Activated CD8-positive, alpha-beta T cell treated with anti-CD3 and anti-CD28 coated beads, Interleukin-2, amount 10 ng/mL, durations not matched to agents 7 days and 5 days (primary cell): ENCODE measurements at regions of chr21 and their contacts with region 1.

Region 1: GRCh38 chr21:34986561-34987500 is 62.3 kb downstream of the RUNX1 start:
- DNase-seq: peak; percentile 84
- ATAC-seq: peak; percentile 70
- H3K4me3 Mint-ChIP-seq: peak overlapping the region; percentile 46
- H3K27ac Mint-ChIP-seq: peak overlapping the region; percentile 28
- H3K4me1 Mint-ChIP-seq: peaks cover 79% of the 10 kb centered on the region
- H3K27me3 Mint-ChIP-seq: peaks cover 28% of the 10 kb centered on the region

Region 2: GRCh38 chr21:34888569-34889319 is 98.1 kb before region 1 on chr21:
- CTCF ChIA-PET with region 1: interaction called, 16 read pairs
- POLR2A ChIA-PET with region 1: interaction called, 7 read pairs
- DNase-seq: peak; percentile 78
- ATAC-seq: peak; percentile 64
- H3K4me3 Mint-ChIP-seq: peak overlapping the region; percentile 86
- H3K27ac Mint-ChIP-seq: peak overlapping the region; percentile 92
- H3K4me1 Mint-ChIP-seq: peaks cover 45% of the 10 kb centered on the region
- H3K27me3 Mint-ChIP-seq: peaks cover 6% of the 10 kb centered on the region

Region 3: GRCh38 chr21:34946916-34947534 is 39.8 kb before region 1 on chr21:
- CTCF ChIA-PET with region 1: interaction called, 16 read pairs
- POLR2A ChIA-PET with region 1: interaction called, 3 read pairs
- DNase-seq: no peak
- ATAC-seq: no peak
- H3K4me3 Mint-ChIP-seq: no peak overlapping the region
- H3K27ac Mint-ChIP-seq: no peak overlapping the region
- H3K4me1 Mint-ChIP-seq: peaks cover 40% of the 10 kb centered on the region
- H3K27me3 Mint-ChIP-seq: peaks cover under 1% of the 10 kb centered on the region

Region 4: DNA sequence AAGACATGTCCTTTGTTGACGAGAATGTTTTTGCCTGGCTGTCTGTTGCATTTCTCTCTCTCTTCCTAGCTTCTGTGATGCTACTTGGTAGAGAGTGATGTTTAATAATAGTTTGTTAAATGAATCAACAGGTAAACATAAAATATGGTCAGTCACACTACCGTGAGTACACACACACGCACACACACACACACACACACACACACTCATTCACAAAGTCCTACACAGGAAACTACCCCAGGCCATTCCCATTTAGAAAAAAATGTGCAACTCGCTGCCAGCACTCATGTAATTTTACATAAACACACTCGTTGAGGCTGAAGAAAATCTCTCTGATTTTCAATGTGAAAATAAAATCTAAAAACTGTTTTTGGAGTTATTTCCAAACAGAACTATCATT is 23.6 kb after region 1 on chr21:
- CTCF ChIA-PET with region 1: interaction called, 8 read pairs
- POLR2A ChIA-PET with region 1: interaction called, 10 read pairs
- DNase-seq: no peak
- ATAC-seq: no peak
- H3K4me3 Mint-ChIP-seq: no peak overlapping the region
- H3K27ac Mint-ChIP-seq: no peak overlapping the region
- H3K4me1 Mint-ChIP-seq: peaks cover 28% of the 10 kb centered on the region
- H3K27me3 Mint-ChIP-seq: peaks cover 11% of the 10 kb centered on the region

Region 5: GRCh38 chr21:35051287-35051818 is 64.5 kb after region 1 on chr21:
- CTCF ChIA-PET with region 1: interaction called, 26 read pairs
- POLR2A ChIA-PET with region 1: interaction called, 20 read pairs
- DNase-seq: peak; percentile 88
- ATAC-seq: peak; percentile 57
- H3K4me3 Mint-ChIP-seq: peak overlapping the region; percentile 30
- H3K27ac Mint-ChIP-seq: peak overlapping the region; percentile 66
- H3K4me1 Mint-ChIP-seq: peaks cover 54% of the 10 kb centered on the region
- H3K27me3 Mint-ChIP-seq: peaks cover 10% of the 10 kb centered on the region